Caco-2 (cell line): ENCODE measurements at regions of chr20 and their contacts with region 1.

Region 1: DNA sequence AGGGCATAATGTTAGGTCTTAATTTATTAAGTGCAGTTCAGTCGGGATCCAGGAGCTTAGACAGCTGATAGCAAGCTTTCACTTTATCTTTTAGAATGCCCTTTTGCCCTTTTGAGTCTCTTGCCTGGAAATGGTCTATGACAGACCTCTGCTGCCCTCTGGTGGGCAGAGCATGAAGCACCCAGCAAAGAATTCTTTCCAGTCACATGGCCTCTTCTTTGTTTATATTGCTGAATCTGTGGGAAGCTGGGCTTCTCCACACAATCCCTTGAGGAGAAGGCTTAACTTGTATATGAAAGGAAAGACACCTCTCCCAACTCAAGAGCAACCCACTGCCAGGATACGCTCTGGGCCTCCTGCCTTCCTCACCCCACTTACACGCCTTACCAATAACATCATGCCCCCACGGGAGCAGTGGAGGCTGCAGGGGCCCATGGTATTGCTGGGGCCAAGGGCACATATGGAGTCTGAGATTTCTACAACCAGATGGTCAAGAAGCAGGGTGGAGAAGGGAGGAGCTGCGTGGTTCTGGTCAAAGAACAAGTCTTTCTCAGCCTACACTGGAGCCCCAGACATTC is 20.4 kb downstream of the WFDC3 start:
- DNase-seq: peak; percentile 92 to 96
- H3K4me3 ChIP-seq: no peak overlapping the region
- H3K4me3 Mint-ChIP-seq: no peak overlapping the region
- H3K27ac Mint-ChIP-seq: peak overlapping the region; percentile 0
- H3K4me1 ChIP-seq: peaks cover 11% of the 10 kb centered on the region
- H3K4me1 Mint-ChIP-seq: peaks cover 10% of the 10 kb centered on the region
- H3K27me3 ChIP-seq: 0 out of 2 replicates have a peak, but pooled peaks cover 2% of the 10 kb centered on the region
- H3K27me3 Mint-ChIP-seq: peaks cover 4% of the 10 kb centered on the region
- CTCF ChIP-seq: peak; percentile 99 to 100

Region 2: GRCh38 chr20:45341939-45342859 is 429.1 kb before region 1 on chr20:
- CTCF ChIA-PET with region 1: interaction called, 14 read pairs
- POLR2A ChIA-PET with region 1: no interaction called
- intact Hi-C with region 1: no loop called
- DNase-seq: peak; percentile 90 to 93
- H3K4me3 ChIP-seq: peak overlapping the region; percentile 24
- H3K4me3 Mint-ChIP-seq: peak overlapping the region; percentile 97
- H3K27ac Mint-ChIP-seq: peak overlapping the region; percentile 77
- H3K4me1 ChIP-seq: peaks cover 99% of the 10 kb centered on the region
- H3K4me1 Mint-ChIP-seq: peaks cover 95% of the 10 kb centered on the region
- H3K27me3 ChIP-seq: no peaks in the 10 kb centered on the region
- H3K27me3 Mint-ChIP-seq: no peaks in the 10 kb centered on the region
- CTCF ChIP-seq: no peak

Region 3: GRCh38 chr20:45415774-45416637 is 355.3 kb before region 1 on chr20 and contains the start of gene PIGT:
- CTCF ChIA-PET with region 1: interaction called, 10 read pairs
- POLR2A ChIA-PET with region 1: no interaction called
- intact Hi-C with region 1: no loop called
- DNase-seq: peak; percentile 95
- H3K4me3 ChIP-seq: peak within 1 kb of the TSS; percentile 89
- H3K4me3 Mint-ChIP-seq: peak within 1 kb of the TSS; percentile 87
- H3K27ac Mint-ChIP-seq: peak within 1 kb of the TSS; percentile 92
- H3K4me1 ChIP-seq: peaks cover 13% of the 10 kb centered on the region; the same call in 1 of the 2 replicates
- H3K4me1 Mint-ChIP-seq: peaks cover 6% of the 10 kb centered on the region
- H3K27me3 ChIP-seq: no peaks in the 10 kb centered on the region
- H3K27me3 Mint-ChIP-seq: no peaks in the 10 kb centered on the region
- CTCF ChIP-seq: peak in 1 of 2 experiments; percentile 30
- total RNA-seq, gene PIGT: 239 and 259 TPM in 2 replicates

Region 4: DNA sequence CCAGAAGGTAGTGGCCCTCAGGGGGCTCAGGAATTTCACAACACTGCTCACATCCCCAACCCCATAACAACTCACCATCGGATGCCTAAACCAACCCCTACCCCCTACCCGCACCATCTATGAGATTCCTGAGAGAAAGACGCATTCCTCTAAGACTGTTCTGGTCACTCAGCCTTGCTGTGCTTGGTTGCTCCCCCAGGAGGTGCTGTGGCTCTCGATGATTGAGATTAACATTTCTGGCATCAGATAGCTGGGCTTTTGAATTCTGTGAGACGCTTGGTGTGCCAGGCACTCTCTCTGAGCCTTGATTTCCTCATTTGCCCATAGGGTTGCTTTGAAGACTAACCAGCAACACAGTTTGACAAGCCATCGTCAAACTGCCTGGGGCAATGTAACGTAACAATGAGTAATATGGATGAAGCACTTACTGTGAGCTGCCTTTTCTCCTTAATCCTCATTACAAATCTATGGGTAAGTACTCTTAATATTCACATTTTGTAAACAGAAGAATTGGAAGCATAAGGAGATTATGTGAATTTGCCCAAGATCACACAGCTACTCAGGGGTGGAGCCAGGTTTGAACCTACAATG is 233.0 kb before region 1 on chr20:
- CTCF ChIA-PET with region 1: interaction called, 19 read pairs
- POLR2A ChIA-PET with region 1: no interaction called
- intact Hi-C with region 1: no loop called
- DNase-seq: no peak
- H3K4me3 ChIP-seq: no peak overlapping the region
- H3K4me3 Mint-ChIP-seq: no peak overlapping the region
- H3K27ac Mint-ChIP-seq: no peak overlapping the region
- H3K4me1 ChIP-seq: no peaks in the 10 kb centered on the region
- H3K4me1 Mint-ChIP-seq: no peaks in the 10 kb centered on the region
- H3K27me3 ChIP-seq: peaks cover 6% of the 10 kb centered on the region
- H3K27me3 Mint-ChIP-seq: peaks cover 20% of the 10 kb centered on the region
- CTCF ChIP-seq: peak in 1 of 2 experiments; percentile 17

Region 5: DNA sequence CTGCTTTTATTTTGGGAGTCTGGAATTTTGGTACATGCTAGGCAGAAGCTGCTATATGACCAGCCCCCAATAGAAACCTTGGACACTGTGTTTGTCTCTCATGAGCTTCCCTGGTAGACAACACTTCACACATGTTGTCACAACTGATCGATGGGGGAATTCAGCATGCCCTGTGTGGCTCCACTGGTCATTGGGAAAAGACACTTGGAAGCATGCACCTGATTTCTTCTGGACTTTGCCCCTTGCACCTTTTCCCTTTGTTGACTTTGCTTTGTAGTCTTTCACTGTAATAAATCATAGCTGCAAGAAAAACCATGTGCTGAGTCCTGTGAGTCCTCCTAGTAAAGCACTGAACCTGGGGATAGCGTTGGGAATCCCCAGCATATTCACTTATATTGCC is 149.7 kb before region 1 on chr20:
- CTCF ChIA-PET with region 1: interaction called, 10 read pairs
- POLR2A ChIA-PET with region 1: no interaction called
- intact Hi-C with region 1: no loop called
- DNase-seq: peak; percentile 79 to 81
- H3K4me3 ChIP-seq: no peak overlapping the region
- H3K4me3 Mint-ChIP-seq: peak overlapping the region; percentile 2
- H3K27ac Mint-ChIP-seq: no peak overlapping the region
- H3K4me1 ChIP-seq: peaks cover 18% of the 10 kb centered on the region
- H3K4me1 Mint-ChIP-seq: peaks cover 19% of the 10 kb centered on the region
- H3K27me3 ChIP-seq: no peaks in the 10 kb centered on the region
- H3K27me3 Mint-ChIP-seq: no peaks in the 10 kb centered on the region
- CTCF ChIP-seq: no peak

Region 6: DNA sequence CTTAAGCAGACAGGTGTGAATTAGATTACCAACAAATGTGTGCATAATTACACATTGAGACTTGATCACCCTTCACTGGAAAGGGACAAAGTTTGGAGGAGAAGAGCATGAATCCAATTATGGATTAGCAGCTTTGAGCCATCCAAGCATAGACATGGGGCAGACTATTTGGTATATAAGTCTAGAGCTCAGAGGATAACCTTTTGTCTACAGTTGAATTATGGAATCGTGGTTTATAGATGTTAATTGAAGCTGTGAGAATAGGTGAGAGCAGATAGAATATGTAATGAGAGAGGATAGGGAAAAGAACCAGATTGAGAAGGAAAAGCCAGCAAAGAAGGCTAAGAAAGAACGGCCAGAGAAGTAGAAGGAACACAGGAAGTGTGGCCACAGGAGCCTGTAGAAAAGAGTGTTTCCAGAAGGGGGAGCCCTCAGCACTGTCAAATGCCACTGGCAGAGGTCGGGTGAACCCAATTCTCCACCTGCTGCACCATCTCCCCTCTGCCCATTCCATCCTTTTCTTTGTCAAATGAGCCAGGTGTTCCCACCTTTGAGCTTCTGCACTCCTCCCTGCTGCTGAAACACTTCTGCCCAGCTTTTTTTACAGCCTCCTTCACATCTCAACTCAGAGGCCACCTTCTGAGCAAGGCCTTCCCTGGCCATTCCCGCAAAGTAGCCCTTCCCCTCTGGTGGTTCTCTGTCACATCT is 27.8 kb after region 1 on chr20:
- CTCF ChIA-PET with region 1: interaction called, 10 read pairs
- POLR2A ChIA-PET with region 1: no interaction called
- intact Hi-C with region 1: no loop called
- DNase-seq: peak; percentile 81 to 89
- H3K4me3 ChIP-seq: no peak overlapping the region
- H3K4me3 Mint-ChIP-seq: no peak overlapping the region
- H3K27ac Mint-ChIP-seq: no peak overlapping the region
- H3K4me1 ChIP-seq: no peaks in the 10 kb centered on the region
- H3K4me1 Mint-ChIP-seq: no peaks in the 10 kb centered on the region
- H3K27me3 ChIP-seq: no peaks in the 10 kb centered on the region
- H3K27me3 Mint-ChIP-seq: no peaks in the 10 kb centered on the region
- CTCF ChIP-seq: peak; percentile 94 to 96